PC-9 (cell line): ENCODE measurements at regions of chr20 and their contacts with region 1.

Region 1: GRCh38 chr20:3342766-3343165 is 64.7 kb downstream of the DNAAF9 start:
- DNase-seq: no peak
- H3K4me3 ChIP-seq: no peak overlapping the region
- H3K27ac ChIP-seq: no peak overlapping the region
- H3K4me1 ChIP-seq: no peaks in the 10 kb centered on the region
- H3K27me3 ChIP-seq: no peaks in the 10 kb centered on the region
- CTCF ChIP-seq: no peak

Region 2: GRCh38 chr20:3358676-3359340 is 16.0 kb after region 1 on chr20:
- CTCF ChIA-PET with region 1: no interaction called
- POLR2A ChIA-PET with region 1: no interaction called
- intact Hi-C with region 1: loop called (anchors 2 kb)
- DNase-seq: no peak
- H3K4me3 ChIP-seq: no peak overlapping the region
- H3K27ac ChIP-seq: no peak overlapping the region
- H3K4me1 ChIP-seq: no peaks in the 10 kb centered on the region
- H3K27me3 ChIP-seq: no peaks in the 10 kb centered on the region
- CTCF ChIP-seq: no peak

Region 3: GRCh38 chr20:3380228-3381070 is 37.7 kb after region 1 on chr20:
- CTCF ChIA-PET with region 1: no interaction called
- POLR2A ChIA-PET with region 1: no interaction called
- intact Hi-C with region 1: no loop called
- DNase-seq: no peak
- H3K4me3 ChIP-seq: no peak overlapping the region
- H3K27ac ChIP-seq: no peak overlapping the region
- H3K4me1 ChIP-seq: no peaks in the 10 kb centered on the region
- H3K27me3 ChIP-seq: no peaks in the 10 kb centered on the region; the same call in 1 of the 2 replicates
- CTCF ChIP-seq: no peak